ENCODE measurements at regions of chr16 and their contacts with region 1.

Region 1: GRCh38 chr16:21584817-21585216 is 14.6 kb upstream of the METTL9 start:
- DNase-seq: no peak
- ATAC-seq: no peak
- H3K4me3 ChIP-seq: no peak overlapping the region
- H3K27ac ChIP-seq: no peak overlapping the region
- H3K4me1 ChIP-seq: no peaks in the 10 kb centered on the region
- H3K27me3 ChIP-seq: no peaks in the 10 kb centered on the region
- CTCF ChIP-seq: no peak
- POLR2A ChIP-seq: no peak
- RAD21 ChIP-seq: no peak

Region 2: GRCh38 chr16:21645261-21645721 is 60.5 kb after region 1 on chr16:
- CTCF ChIA-PET with region 1: interaction called, 3 read pairs
- POLR2A ChIA-PET with region 1: no interaction called
- RAD21 ChIA-PET with region 1: no interaction called
- intact Hi-C with region 1: loop called (anchors 1 kb)
- DNase-seq: no peak
- ATAC-seq: no peak
- H3K4me3 ChIP-seq: no peak overlapping the region
- H3K27ac ChIP-seq: no peak overlapping the region
- H3K4me1 ChIP-seq: no peaks in the 10 kb centered on the region
- H3K27me3 ChIP-seq: no peaks in the 10 kb centered on the region
- CTCF ChIP-seq: no peak
- POLR2A ChIP-seq: no peak
- RAD21 ChIP-seq: no peak

Region 3: DNA sequence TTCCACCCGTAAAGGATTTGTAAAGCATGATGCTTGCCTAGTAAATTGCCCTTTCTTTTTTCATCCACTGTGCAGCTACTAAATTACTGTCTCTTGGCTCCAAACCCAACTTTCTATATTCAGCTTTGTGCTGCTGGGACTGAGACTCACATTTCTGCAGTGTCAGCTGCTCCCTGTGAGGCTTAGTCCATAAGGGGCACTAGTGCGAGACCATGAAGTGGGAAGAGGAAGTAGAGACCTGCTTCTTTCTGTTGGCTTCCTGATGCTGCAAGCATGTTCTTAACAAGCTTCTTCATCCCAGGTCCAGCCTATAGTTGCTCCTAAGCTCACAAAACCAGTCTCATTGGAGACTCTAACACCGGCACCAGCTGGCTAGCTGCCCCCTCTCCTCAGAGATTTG is 1154.3 kb after region 1 on chr16:
- CTCF ChIA-PET with region 1: no interaction called
- POLR2A ChIA-PET with region 1: no interaction called
- RAD21 ChIA-PET with region 1: no interaction called
- intact Hi-C with region 1: no loop called
- DNase-seq: no peak
- ATAC-seq: no peak
- H3K4me3 ChIP-seq: no peak overlapping the region
- H3K27ac ChIP-seq: no peak overlapping the region
- H3K4me1 ChIP-seq: no peaks in the 10 kb centered on the region
- H3K27me3 ChIP-seq: peaks cover 21% of the 10 kb centered on the region
- CTCF ChIP-seq: no peak
- POLR2A ChIP-seq: no peak
- RAD21 ChIP-seq: no peak